GM23248 (cell line): ENCODE measurements at regions of chr11 and their contacts with region 1.

Region 1: GRCh38 chr11:48001438-48002021 is 21.2 kb downstream of the PTPRJ start:
- DNase-seq: peak; percentile 73
- H3K4me3 ChIP-seq: no peak overlapping the region
- H3K27ac ChIP-seq: peak overlapping the region; percentile 15; the same call in 1 of the 2 replicates
- H3K4me1 ChIP-seq: peaks cover 42% of the 10 kb centered on the region
- H3K27me3 ChIP-seq: no peaks in the 10 kb centered on the region

Region 2: DNA sequence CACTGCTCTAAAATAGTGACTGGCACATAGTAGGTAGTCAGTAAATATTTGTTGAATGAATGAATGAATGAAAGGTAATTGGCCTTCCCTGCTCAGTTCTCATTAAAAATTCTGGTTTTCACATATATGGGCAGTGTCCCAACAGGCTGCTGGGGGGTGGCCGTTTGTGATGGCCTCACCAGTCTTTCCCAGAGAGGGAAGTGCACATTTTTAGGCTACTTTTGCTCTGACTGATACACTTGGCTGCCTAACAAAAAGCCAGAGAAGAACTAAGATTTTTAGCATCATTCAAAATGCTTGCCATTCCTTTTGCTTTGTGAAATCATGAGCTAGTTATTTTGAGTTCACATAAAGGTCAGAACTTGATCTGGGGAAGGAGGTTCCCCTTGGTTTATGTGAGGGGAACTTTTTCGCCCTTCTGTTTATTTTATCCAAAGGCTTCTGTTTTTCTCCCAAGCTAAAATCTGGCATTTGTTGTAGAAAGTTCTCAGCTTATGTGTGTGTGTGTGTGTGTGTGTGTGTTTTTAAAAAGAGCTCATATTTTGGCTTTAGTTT is 62.0 kb after region 1 on chr11:
- in situ Hi-C with region 1: loop called (anchors 10 kb)
- DNase-seq: peak; percentile 96
- H3K4me3 ChIP-seq: peak overlapping the region; percentile 34
- H3K27ac ChIP-seq: peak overlapping the region; percentile 91
- H3K4me1 ChIP-seq: peaks cover 50% of the 10 kb centered on the region
- H3K27me3 ChIP-seq: no peaks in the 10 kb centered on the region